HEK293 (cell line): ENCODE measurements at regions of chr3 and their contacts with region 1.

Region 1: DNA sequence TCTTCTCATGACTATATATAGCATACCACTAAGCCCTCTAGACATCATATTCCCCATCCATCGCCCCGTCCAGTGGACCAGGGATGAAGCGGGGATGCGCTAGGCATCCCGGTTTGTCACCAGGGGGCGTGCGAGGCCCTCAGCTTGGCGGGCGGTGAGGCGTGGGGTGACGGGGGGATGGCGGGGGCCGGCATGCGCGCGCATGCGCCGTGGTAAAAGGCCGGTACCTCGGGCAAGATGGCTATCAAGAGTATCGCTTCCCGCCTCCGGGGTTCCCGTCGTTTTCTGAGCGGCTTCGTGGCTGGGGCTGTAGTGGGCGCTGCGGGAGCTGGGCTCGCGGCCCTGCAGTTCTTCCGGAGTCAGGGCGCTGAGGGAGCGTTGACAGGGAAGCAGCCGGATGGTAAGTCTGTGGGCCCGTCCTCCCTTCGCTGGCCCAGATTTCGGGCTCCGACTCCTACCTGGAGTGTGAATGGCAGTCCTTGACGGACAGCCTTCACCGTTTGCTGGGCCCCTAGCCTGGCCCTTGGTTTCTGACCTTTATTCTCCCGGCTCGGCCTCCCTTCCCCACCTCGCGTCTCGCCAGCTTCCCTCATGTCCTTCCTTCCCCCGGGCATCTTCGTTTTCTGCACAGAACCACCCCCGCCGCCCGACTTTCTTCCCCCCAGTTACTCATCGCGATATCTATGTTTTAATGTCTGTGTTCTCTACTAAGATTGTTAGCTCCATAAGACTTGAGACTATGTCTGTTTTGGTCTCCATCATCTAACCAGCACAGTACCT is at the start of gene EXOG:
- H3K4me3 ChIP-seq: peak within 1 kb of the TSS; percentile 82
- H3K27ac ChIP-seq: peak within 1 kb of the TSS; percentile 77
- H3K4me1 ChIP-seq: no peaks in the 10 kb centered on the region
- CTCF ChIP-seq: peak; percentile 79

Region 2: GRCh38 chr3:38346587-38347410 is 149.5 kb before region 1 on chr3 and contains the start of gene XYLB:
- CTCF ChIA-PET with region 1: no interaction called
- POLR2A ChIA-PET with region 1: no interaction called
- H3K4me3 ChIP-seq: peak within 1 kb of the TSS; percentile 59
- H3K27ac ChIP-seq: peak within 1 kb of the TSS; percentile 13; the same call in 1 of the 2 replicates
- H3K4me1 ChIP-seq: no peaks in the 10 kb centered on the region
- CTCF ChIP-seq: peak; percentile 89

Region 3: DNA sequence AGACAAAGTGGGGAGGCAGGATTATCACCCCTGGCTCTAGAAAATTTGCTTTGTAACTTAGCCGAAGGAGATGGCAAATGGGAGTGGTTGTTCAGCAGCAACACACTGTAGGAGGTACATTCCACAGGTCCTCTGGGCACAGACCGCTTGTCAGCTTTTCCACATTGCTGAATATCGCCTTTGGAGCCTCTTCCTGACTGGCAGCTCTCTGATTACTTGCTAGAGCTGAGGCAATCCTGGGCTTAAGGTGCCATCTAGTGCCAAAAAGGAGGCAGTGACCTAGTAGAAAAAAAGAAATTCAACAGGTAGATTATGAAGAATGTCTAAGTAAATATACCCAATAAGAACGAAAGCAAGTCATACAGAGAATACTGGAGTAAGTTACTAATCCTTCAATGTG is 166.2 kb after region 1 on chr3:
- CTCF ChIA-PET with region 1: interaction called, 13 read pairs
- POLR2A ChIA-PET with region 1: no interaction called
- H3K4me3 ChIP-seq: no peak overlapping the region
- H3K27ac ChIP-seq: no peak overlapping the region
- H3K4me1 ChIP-seq: no peaks in the 10 kb centered on the region
- CTCF ChIP-seq: no peak